Mucosa of descending colon (tissue), 3 donors: ENCODE measurements at regions of chr5 and their contacts with region 1.

Region 1: GRCh38 chr5:154608531-154609011 is 130.5 kb upstream of the HAND1 start:
- DNase-seq: no peak
- ATAC-seq: no peak
- H3K4me3 ChIP-seq: no peak overlapping the region
- H3K4me1 ChIP-seq: peaks cover 12% of the 10 kb centered on the region
- CTCF ChIP-seq: no peak

Region 2: GRCh38 chr5:154467655-154468354 is 140.8 kb before region 1 on chr5:
- intact Hi-C with region 1: loop called (anchors 5 kb)
- DNase-seq: peak; percentile 69 to 88 (median 83)
- ATAC-seq: peak; percentile 97
- H3K4me3 ChIP-seq: no peak overlapping the region
- H3K4me1 ChIP-seq: no peaks in the 10 kb centered on the region
- CTCF ChIP-seq: peak; percentile 89

Region 3: GRCh38 chr5:154472871-154473580 is 135.5 kb before region 1 on chr5:
- intact Hi-C with region 1: loop called (anchors 5 kb)
- DNase-seq: no peak
- ATAC-seq: no peak
- H3K4me3 ChIP-seq: no peak overlapping the region
- H3K4me1 ChIP-seq: peaks cover 31% of the 10 kb centered on the region
- CTCF ChIP-seq: no peak

Region 4: GRCh38 chr5:155260798-155261197 is 652.2 kb after region 1 on chr5:
- intact Hi-C with region 1: no loop called
- DNase-seq: no peak
- ATAC-seq: no peak
- H3K4me3 ChIP-seq: no peak overlapping the region
- H3K4me1 ChIP-seq: no peaks in the 10 kb centered on the region
- CTCF ChIP-seq: no peak